Heart right ventricle (tissue), 16 donors: ENCODE measurements at regions of chr15 and their contacts with region 1.

Region 1: GRCh38 chr15:77282333-77282732 is 137.6 kb downstream of the PEAK1 start:
- DNase-seq: peak in 1 of 2 donors; percentile 21
- ATAC-seq: peak in 6 of 8 donors; percentile 47 to 71 (median 58)
- H3K4me3 ChIP-seq: no peak overlapping the region
- H3K27ac ChIP-seq: peak overlapping the region in 2 of 10 donors; percentile 1 to 43
- H3K4me1 ChIP-seq: peaks cover 0 to 18% (median 12%) of the 10 kb centered on the region in 9 donors
- H3K27me3 ChIP-seq: no peaks in the 10 kb centered on the region
- CTCF ChIP-seq: no peak

Region 2: DNA sequence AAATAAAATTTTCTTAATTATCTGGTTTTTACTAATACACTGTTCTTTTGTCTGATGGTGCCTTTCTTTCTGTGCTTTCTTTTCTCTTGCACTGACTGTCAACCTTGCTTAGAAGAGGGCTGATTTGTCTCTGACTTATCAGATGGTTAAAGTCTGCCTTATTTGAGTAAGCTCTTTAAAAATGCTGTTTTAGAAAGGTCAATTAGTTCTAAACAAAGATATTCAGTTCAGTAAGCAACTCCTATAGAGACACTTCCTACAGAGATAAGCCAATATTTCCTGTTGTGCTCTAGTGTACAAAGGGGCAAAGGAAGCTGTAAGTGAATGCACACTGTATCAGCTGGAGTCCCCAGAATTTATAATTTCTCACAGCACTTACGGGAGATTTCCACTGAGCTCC is 58.0 kb before region 1 on chr15:
- intact Hi-C with region 1: loop called in 1 of 10 experiments (anchors 10 kb)
- DNase-seq: no peak
- ATAC-seq: peak in 2 of 8 donors; percentile 48 to 55
- H3K4me3 ChIP-seq: no peak overlapping the region
- H3K27ac ChIP-seq: peak overlapping the region in 5 of 10 donors; percentile 7 to 60 (median 33)
- H3K4me1 ChIP-seq: peaks cover 0 to 50% (median 28%) of the 10 kb centered on the region in 9 donors
- H3K27me3 ChIP-seq: no peaks in the 10 kb centered on the region
- CTCF ChIP-seq: no peak

Region 3: GRCh38 chr15:77335298-77335697 is 53.0 kb after region 1 on chr15:
- intact Hi-C with region 1: loop called in 1 of 10 experiments (anchors 10 kb)
- DNase-seq: peak in 1 of 2 donors; percentile 60
- ATAC-seq: peak in 7 of 8 donors; percentile 33 to 82 (median 63)
- H3K4me3 ChIP-seq: no peak overlapping the region
- H3K27ac ChIP-seq: peak overlapping the region in 2 of 10 donors; percentile 5 to 34
- H3K4me1 ChIP-seq: peaks cover 2 to 41% (median 21%) of the 10 kb centered on the region in 9 donors
- H3K27me3 ChIP-seq: no peaks in the 10 kb centered on the region
- CTCF ChIP-seq: no peak

Region 4: DNA sequence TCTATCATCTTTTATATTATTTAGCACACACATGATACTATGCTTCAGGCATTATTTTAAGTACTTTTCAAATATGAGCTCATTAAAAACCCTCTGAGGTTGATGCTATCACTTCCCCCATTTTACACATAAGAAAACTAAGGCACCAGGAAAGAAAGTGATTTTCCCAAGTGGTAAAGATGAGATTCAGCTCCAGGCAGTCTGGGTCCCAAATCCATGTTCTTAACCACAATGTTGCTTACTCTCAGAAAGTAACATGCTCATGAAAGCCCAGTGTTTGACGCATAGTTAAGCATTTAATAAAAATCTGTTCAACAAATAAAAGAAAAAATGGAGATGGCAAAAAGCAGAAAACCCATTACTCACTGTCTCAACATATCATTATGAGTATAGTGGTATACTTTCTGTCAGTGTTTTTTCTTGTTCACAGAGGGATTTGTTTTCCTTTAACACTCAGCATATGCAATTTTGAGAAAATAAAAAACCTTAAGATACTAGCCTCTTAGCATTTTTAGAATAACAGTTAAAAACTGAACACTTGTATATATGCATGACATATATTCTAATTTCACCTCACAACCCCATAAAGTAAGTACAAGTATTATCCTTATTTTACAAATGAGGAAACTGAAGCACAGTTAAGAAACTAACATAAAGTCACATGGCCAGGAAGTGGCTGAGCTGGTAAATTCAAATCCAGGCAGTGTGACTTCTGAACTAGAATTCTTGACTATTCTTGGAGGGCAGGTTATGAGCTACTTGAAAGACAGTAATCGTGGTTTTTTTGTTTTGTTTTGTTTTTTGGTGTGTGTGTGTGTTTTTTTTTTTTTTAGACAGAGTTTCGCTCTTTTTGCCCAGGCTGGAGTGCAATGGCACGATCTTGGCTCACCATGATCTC is 127.2 kb after region 1 on chr15:
- intact Hi-C with region 1: loop called in 2 of 10 experiments (anchors 5 to 10 kb)
- DNase-seq: no peak
- ATAC-seq: peak in 5 of 8 donors; percentile 29 to 63 (median 54)
- H3K4me3 ChIP-seq: no peak overlapping the region
- H3K27ac ChIP-seq: peak overlapping the region in 2 of 10 donors; percentile 8 to 57
- H3K4me1 ChIP-seq: peaks cover 2 to 75% (median 44%) of the 10 kb centered on the region in 9 donors
- H3K27me3 ChIP-seq: no peaks in the 10 kb centered on the region
- CTCF ChIP-seq: no peak